ENCODE measurements at regions of chr6 and their contacts with region 1.

Region 1: GRCh38 chr6:165729307-165729936 is 66.4 kb upstream of the PDE10A start:
- DNase-seq: no peak
- H3K4me3 ChIP-seq: no peak overlapping the region
- H3K27ac ChIP-seq: no peak overlapping the region
- H3K4me1 ChIP-seq: no peaks in the 10 kb centered on the region
- H3K27me3 ChIP-seq: peaks cover 0 to 6% (median 0%) of the 10 kb centered on the region in 4 donors
- CTCF ChIP-seq: peak; percentile 56 to 76 (median 70)
- EP300 ChIP-seq: no peak
- POLR2A ChIP-seq: no peak

Region 2: GRCh38 chr6:165850434-165851019 is 121.1 kb after region 1 on chr6:
- intact Hi-C with region 1: loop called (anchors 5 kb)
- DNase-seq: peak; percentile 94
- H3K4me3 ChIP-seq: peak overlapping the region in 3 of 4 donors; percentile 3 to 9 (median 7)
- H3K27ac ChIP-seq: no peak overlapping the region
- H3K4me1 ChIP-seq: peaks cover 8 to 16% (median 13%) of the 10 kb centered on the region in 4 donors
- H3K27me3 ChIP-seq: peaks cover 0 to 39% (median 16%) of the 10 kb centered on the region in 4 donors
- CTCF ChIP-seq: peak in 2 of 3 experiments; percentile 94 to 96
- EP300 ChIP-seq: no peak
- POLR2A ChIP-seq: no peak

Region 3: GRCh38 chr6:165931675-165932074 is 202.3 kb after region 1 on chr6:
- intact Hi-C with region 1: no loop called
- DNase-seq: no peak
- H3K4me3 ChIP-seq: no peak overlapping the region
- H3K27ac ChIP-seq: no peak overlapping the region
- H3K4me1 ChIP-seq: no peaks in the 10 kb centered on the region
- H3K27me3 ChIP-seq: no peaks in the 10 kb centered on the region
- CTCF ChIP-seq: no peak
- EP300 ChIP-seq: no peak
- POLR2A ChIP-seq: no peak

Region 4: DNA sequence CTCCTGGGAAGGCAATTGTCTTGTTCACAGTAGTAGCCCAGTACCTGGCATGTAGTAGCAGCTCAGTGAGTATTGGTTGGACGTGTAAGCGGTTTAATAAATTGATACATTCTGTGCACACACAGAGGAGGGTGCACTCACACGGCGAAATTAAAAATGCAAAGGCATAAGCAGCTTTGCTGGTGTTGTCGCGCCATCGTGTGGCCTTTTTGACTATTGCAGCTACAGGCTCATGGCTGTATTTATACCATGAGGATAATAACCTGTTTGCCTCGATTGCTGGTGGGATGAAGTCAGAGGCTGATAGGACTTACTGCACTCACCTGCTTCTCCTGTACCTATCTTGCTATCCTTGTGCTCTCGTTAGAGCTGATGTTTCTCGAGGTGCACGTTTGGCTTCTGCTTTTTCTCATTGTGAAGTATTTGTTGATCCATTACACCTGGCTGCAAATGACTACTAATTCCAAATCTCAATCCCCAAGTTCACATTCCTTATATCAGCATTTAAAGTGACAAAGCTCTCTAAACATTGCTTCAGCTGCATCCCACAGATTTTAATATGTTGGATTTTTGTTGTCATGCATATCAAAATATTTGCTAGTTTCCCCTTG is 376.8 kb after region 1 on chr6:
- intact Hi-C with region 1: loop called (anchors 10 kb)
- DNase-seq: peak; percentile 93
- H3K4me3 ChIP-seq: no peak overlapping the region
- H3K27ac ChIP-seq: no peak overlapping the region
- H3K4me1 ChIP-seq: peaks cover 0 to 6% (median 0%) of the 10 kb centered on the region in 4 donors
- H3K27me3 ChIP-seq: no peaks in the 10 kb centered on the region
- CTCF ChIP-seq: peak; percentile 89 to 96 (median 90)
- EP300 ChIP-seq: no peak
- POLR2A ChIP-seq: no peak

Measured in esophagus muscularis mucosa (tissue), 4 donors.